Activated CD8-positive, alpha-beta T cell treated with anti-CD3 and anti-CD28 coated beads, Interleukin-2, amount 10 ng/mL, durations not matched to agents 7 days and 5 days (primary cell): ENCODE measurements at regions of chr15 and their contacts with region 1.

Region 1: GRCh38 chr15:49155110-49155833 is at the start of gene COPS2:
- DNase-seq: peak; percentile 97
- ATAC-seq: peak; percentile 94
- H3K4me3 Mint-ChIP-seq: peak within 1 kb of the TSS; percentile 99
- H3K27ac Mint-ChIP-seq: peak within 1 kb of the TSS; percentile 99
- H3K4me1 Mint-ChIP-seq: peaks cover 43% of the 10 kb centered on the region
- H3K27me3 Mint-ChIP-seq: no peaks in the 10 kb centered on the region
- total RNA-seq, gene COPS2: 55.8 to 56.8 TPM

Region 2: GRCh38 chr15:49169880-49170597 is 14.8 kb after region 1 on chr15 and contains the start of gene GALK2:
- CTCF ChIA-PET with region 1: interaction called, 6 read pairs
- POLR2A ChIA-PET with region 1: interaction called, 27 read pairs
- DNase-seq: peak; percentile 85
- ATAC-seq: peak; percentile 99
- H3K4me3 Mint-ChIP-seq: peak within 1 kb of the TSS; percentile 90
- H3K27ac Mint-ChIP-seq: peak within 1 kb of the TSS; percentile 94
- H3K4me1 Mint-ChIP-seq: peaks cover 30% of the 10 kb centered on the region
- H3K27me3 Mint-ChIP-seq: no peaks in the 10 kb centered on the region
- total RNA-seq, gene GALK2: 23.1 to 24.6 TPM